ENCODE measurements at regions of chr19 and their contacts with region 1.

Region 1: GRCh38 chr19:10835754-10836477 is at the start of gene TMED1:
- DNase-seq: peak; percentile 94
- ATAC-seq: peak; percentile 91
- H3K4me3 ChIP-seq: peak within 1 kb of the TSS; percentile 61 to 71
- H3K27ac ChIP-seq: peak within 1 kb of the TSS; percentile 91
- H3K4me1 ChIP-seq: no peaks in the 10 kb centered on the region; the same call in 1 of the 2 replicates
- H3K27me3 ChIP-seq: no peaks in the 10 kb centered on the region
- CTCF ChIP-seq: no peak; the same call in 1 of the 2 replicates
- total RNA-seq, gene TMED1: 30.3 TPM

Region 2: GRCh38 chr19:10858204-10858828 is 22.4 kb after region 1 on chr19:
- CTCF ChIA-PET with region 1: interaction called, 16 read pairs
- POLR2A ChIA-PET with region 1: interaction called, 5 read pairs
- in situ Hi-C with region 1: no loop called
- intact Hi-C with region 1: no loop called
- DNase-seq: no peak
- ATAC-seq: peak; percentile 36; the same call in 1 of the 2 replicates
- H3K4me3 ChIP-seq: no peak overlapping the region
- H3K27ac ChIP-seq: no peak overlapping the region
- H3K4me1 ChIP-seq: 0 out of 2 replicates have a peak, but pooled peaks cover 2% of the 10 kb centered on the region
- H3K27me3 ChIP-seq: no peaks in the 10 kb centered on the region
- CTCF ChIP-seq: peak; percentile 88

Region 3: DNA sequence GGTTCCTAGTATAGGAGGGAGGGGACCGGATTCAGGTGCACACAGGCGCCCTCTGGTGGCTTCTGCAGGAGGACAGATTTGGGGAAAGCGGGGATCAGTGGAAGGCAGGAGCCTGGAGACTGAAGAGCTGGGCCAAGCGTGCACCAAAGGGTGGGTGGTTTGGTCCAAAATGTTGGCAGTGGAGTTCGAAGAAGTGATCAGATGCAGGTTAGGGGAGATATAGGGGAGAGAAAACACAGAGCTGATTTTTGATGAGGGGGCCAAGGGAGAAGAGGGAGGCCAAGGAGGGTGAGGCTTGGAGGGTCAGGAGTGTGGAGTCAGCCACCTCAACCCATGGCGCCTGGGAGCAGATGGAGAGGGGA is 28.6 kb after region 1 on chr19:
- CTCF ChIA-PET with region 1: interaction called, 16 read pairs
- POLR2A ChIA-PET with region 1: no interaction called
- in situ Hi-C with region 1: no loop called
- intact Hi-C with region 1: no loop called
- DNase-seq: peak; percentile 62
- ATAC-seq: peak; percentile 95
- H3K4me3 ChIP-seq: no peak overlapping the region
- H3K27ac ChIP-seq: no peak overlapping the region
- H3K4me1 ChIP-seq: peaks cover 3% of the 10 kb centered on the region; the same call in 1 of the 2 replicates
- H3K27me3 ChIP-seq: no peaks in the 10 kb centered on the region
- CTCF ChIP-seq: peak; percentile 91